CD8-positive, alpha-beta T cell (primary cell): ENCODE measurements at regions of chr16 and their contacts with region 1.

Region 1: DNA sequence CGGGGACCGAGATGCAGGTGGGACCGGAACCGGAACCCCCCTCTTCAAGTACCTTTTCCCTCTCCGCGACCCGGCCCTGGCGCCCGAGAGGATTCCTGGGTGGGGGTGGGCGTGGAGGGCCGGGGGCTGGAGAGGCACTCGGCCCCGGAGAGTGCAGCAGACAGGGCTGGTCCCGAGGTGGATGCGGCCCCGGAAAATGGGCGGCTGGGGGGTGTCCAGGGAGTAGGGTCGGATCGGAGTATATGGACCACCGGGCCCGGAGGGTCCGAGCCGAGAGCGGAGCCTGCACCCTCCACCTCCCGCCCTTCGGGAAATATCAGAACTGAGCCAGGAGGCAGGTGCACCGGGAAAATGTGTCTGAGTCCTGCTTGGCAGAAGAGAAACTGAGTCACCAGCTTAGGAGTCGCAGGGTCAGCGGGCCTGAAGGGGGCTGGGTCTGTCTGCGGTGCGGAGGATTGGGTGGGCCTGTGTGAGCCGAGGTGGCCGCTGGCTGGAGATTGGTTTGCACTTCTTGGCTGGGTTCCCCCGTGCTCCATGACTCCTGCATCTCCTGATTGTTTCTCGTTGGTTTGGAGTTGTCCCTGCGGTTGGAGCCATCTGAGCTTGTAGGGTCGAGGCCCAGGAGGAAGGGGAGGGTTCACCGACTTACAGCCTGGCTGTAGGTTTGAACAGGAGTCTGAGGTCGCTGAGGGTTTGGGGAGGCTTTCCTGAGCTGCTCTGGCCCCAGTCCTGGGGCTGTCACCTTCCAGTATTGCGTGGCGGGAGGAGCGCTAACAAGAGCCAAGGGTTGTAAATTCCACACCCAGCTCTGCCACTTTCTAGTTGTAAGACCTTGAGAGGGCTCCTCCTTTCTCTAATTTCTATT is 518 bp downstream of the SH2B1 start:
- DNase-seq: peak in 4 of 9 experiments; percentile 20 to 70 (median 60)
- ATAC-seq: no peak
- H3K4me3 ChIP-seq: peak overlapping the region; percentile 97 to 100
- H3K4me3 Mint-ChIP-seq: peak overlapping the region; percentile 99
- H3K27ac ChIP-seq: peak overlapping the region; percentile 84 to 97
- H3K27ac Mint-ChIP-seq: peak overlapping the region; percentile 99
- H3K4me1 ChIP-seq: peaks cover 16% of the 10 kb centered on the region
- H3K4me1 Mint-ChIP-seq: peaks cover 33% of the 10 kb centered on the region
- H3K27me3 ChIP-seq: no peaks in the 10 kb centered on the region
- H3K27me3 Mint-ChIP-seq: no peaks in the 10 kb centered on the region
- CTCF ChIP-seq: no peak

Region 2: GRCh38 chr16:28553776-28554633 is 310.2 kb before region 1 on chr16 and contains the start of gene SGF29:
- CTCF ChIA-PET with region 1: no interaction called
- POLR2A ChIA-PET with region 1: no interaction called
- intact Hi-C with region 1: loop called in 1 of 2 experiments (anchors 5 kb)
- DNase-seq: peak; percentile 86 to 97 (median 93)
- ATAC-seq: peak; percentile 93
- H3K4me3 ChIP-seq: peak within 1 kb of the TSS; percentile 87 to 99
- H3K4me3 Mint-ChIP-seq: peak within 1 kb of the TSS; percentile 92
- H3K27ac ChIP-seq: peak within 1 kb of the TSS; percentile 95 to 98
- H3K27ac Mint-ChIP-seq: peak within 1 kb of the TSS; percentile 98
- H3K4me1 ChIP-seq: peaks cover 18% of the 10 kb centered on the region
- H3K4me1 Mint-ChIP-seq: peaks cover 36% of the 10 kb centered on the region
- H3K27me3 ChIP-seq: no peaks in the 10 kb centered on the region
- H3K27me3 Mint-ChIP-seq: no peaks in the 10 kb centered on the region
- CTCF ChIP-seq: no peak
- total RNA-seq, gene SGF29: 41.1 to 44.5 TPM

Region 3: GRCh38 chr16:28823872-28824716 is 40.1 kb before region 1 on chr16:
- CTCF ChIA-PET with region 1: no interaction called
- POLR2A ChIA-PET with region 1: interaction called, 12 read pairs
- intact Hi-C with region 1: loop called (anchors 1 kb)
- DNase-seq: peak; percentile 88 to 97 (median 95)
- ATAC-seq: peak; percentile 67
- H3K4me3 ChIP-seq: peak overlapping the region; percentile 74 to 94
- H3K4me3 Mint-ChIP-seq: peak overlapping the region; percentile 97
- H3K27ac ChIP-seq: peak overlapping the region; percentile 93 to 94
- H3K27ac Mint-ChIP-seq: peak overlapping the region; percentile 99
- H3K4me1 ChIP-seq: peaks cover 30% of the 10 kb centered on the region
- H3K4me1 Mint-ChIP-seq: peaks cover 43% of the 10 kb centered on the region
- H3K27me3 ChIP-seq: no peaks in the 10 kb centered on the region
- H3K27me3 Mint-ChIP-seq: no peaks in the 10 kb centered on the region
- CTCF ChIP-seq: peak; percentile 21

Region 4: DNA sequence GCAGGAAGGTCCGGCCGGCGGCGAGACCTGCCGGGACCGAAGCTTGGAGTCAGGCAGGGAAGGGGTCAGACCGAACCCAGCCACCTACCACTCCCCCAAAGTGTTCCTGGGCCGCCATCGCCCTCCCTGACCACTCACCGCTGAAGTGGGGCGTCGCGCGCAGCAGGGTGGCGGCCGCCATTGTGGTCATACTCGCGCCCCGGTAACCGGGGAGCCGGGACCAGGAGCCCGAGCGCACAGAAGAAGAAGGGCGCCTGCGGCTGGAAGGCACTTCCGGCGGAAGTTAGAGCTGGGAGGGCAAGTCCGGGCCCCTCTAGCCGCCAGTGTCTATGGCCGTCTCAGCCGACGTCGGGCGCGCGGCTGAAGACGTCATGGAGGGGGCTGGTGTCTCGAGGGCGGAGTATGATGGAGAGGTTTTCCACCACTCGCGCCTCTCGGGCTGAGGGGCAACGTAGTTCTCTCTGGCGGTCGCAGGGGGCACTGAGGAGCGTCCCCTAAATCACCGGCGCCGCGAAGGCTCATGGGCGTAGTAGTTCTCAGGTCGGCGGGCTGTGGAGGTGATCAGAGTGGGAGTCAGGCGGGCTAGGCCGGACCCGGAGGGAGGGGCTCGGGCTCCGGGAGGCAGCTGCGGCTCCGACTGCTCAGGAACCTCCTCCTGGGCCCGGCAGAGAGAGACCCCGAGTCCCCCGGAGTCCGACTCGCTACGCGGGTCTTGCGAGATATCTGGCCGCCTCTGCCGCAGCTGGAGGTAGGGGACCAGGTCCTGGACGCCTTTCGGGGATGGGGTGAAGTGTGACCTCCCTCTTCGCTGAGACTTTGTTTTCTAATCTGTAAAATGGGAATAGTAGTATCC is 17.9 kb before region 1 on chr16 and contains the start of gene TUFM:
- CTCF ChIA-PET with region 1: interaction called, 35 read pairs
- POLR2A ChIA-PET with region 1: interaction called, 29 read pairs
- intact Hi-C with region 1: loop called (anchors 1 kb)
- DNase-seq: peak; percentile 96 to 99 (median 98)
- ATAC-seq: peak; percentile 96
- H3K4me3 ChIP-seq: peak within 1 kb of the TSS; percentile 83 to 100
- H3K4me3 Mint-ChIP-seq: peak within 1 kb of the TSS; percentile 91
- H3K27ac ChIP-seq: peak within 1 kb of the TSS; percentile 78 to 93
- H3K27ac Mint-ChIP-seq: peak within 1 kb of the TSS; percentile 94
- H3K4me1 ChIP-seq: peaks cover 23% of the 10 kb centered on the region
- H3K4me1 Mint-ChIP-seq: peaks cover 32% of the 10 kb centered on the region
- H3K27me3 ChIP-seq: no peaks in the 10 kb centered on the region
- H3K27me3 Mint-ChIP-seq: no peaks in the 10 kb centered on the region
- CTCF ChIP-seq: peak; percentile 75
- total RNA-seq, gene TUFM: 111 to 119 TPM

Region 5: DNA sequence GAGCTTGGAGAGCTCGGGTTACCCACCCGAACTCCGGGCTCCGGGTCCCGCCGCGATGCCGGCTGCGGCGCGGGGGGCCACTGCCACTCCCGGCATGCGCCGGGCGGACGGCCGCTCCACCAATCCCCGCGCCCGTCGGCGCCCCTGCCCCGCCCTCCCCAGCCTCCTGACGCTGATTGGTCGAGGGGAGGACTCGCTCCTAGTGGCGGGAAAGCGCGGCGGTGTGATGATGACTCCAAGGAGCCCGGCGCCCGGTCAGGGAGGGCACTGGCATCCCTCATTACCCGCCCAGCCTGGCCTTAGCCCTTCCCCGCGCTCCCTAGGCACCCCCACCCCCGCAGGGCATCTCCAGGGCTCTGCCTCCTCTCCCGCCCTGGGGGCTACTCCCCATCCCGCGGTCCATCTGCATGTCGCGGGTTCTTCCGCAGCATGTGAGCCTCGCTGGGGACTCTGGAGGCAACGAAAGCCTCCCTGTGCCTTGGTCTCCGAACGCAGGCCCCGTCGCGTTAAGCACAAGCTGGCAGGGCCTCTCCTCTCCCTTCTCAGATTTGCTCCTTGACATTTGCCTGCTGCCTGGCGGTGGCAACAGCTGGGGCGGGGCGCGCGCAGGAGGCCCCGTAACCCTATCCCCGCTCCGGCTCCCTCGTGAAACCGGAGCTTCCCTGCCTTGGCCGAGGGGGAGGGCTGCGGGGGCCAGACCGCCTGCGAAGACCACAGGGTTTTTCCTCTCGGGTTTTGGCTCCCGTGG is 15.9 kb after region 1 on chr16:
- CTCF ChIA-PET with region 1: interaction called, 4 read pairs
- POLR2A ChIA-PET with region 1: interaction called, 7 read pairs
- intact Hi-C with region 1: loop called (anchors 1 kb)
- DNase-seq: peak; percentile 78 to 91 (median 89)
- ATAC-seq: peak; percentile 97
- H3K4me3 ChIP-seq: peak overlapping the region; percentile 85 to 88
- H3K4me3 Mint-ChIP-seq: peak overlapping the region; percentile 86
- H3K27ac ChIP-seq: peak overlapping the region in 1 of 2 experiments; percentile 39
- H3K27ac Mint-ChIP-seq: no peak overlapping the region
- H3K4me1 ChIP-seq: peaks cover 9% of the 10 kb centered on the region
- H3K4me1 Mint-ChIP-seq: peaks cover 16% of the 10 kb centered on the region
- H3K27me3 ChIP-seq: no peaks in the 10 kb centered on the region
- H3K27me3 Mint-ChIP-seq: peaks cover 14% of the 10 kb centered on the region
- CTCF ChIP-seq: no peak